ENCODE measurements at regions of chr5 and their contacts with region 1.

Region 1: DNA sequence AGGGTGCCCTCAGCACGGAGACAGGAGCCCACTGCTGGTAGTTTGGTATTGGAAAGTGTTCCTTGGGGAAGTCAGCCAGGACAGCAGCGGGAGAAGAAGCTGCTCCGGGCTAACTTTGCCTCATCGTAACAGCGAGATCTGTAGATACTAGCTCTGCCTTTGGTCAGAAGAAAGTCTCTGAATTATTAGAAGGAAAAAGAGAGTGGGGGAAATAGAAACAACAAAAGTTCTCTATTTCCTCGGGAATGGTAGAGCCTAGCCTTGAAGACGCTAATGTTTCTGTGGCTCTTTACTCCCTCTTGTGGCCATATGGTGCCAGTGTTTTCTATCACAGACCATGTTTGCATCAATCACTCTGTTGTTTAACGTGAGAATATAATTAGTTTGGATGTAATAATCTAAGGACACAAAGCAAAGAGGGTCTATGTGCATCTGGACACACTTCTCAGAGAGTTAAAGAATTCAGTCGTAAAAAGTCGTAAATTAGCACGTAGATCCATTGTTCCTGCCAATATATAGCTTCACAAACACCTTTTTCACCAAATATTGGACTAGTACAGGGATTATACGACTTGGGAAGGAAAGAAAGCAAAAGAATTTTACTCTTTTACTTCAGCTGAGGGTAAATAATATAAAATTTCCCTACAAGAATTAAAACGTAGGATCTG is 40.2 kb upstream of the HSD17B4 start:
- DNase-seq: no peak

Region 2: GRCh38 chr5:118987988-118988865 is 423.8 kb before region 1 on chr5 and contains the start of gene DTWD2:
- intact Hi-C with region 1: loop called (anchors 1 kb)
- DNase-seq: peak; percentile 97
- total RNA-seq, gene DTWD2: 10.1 TPM

Region 3: DNA sequence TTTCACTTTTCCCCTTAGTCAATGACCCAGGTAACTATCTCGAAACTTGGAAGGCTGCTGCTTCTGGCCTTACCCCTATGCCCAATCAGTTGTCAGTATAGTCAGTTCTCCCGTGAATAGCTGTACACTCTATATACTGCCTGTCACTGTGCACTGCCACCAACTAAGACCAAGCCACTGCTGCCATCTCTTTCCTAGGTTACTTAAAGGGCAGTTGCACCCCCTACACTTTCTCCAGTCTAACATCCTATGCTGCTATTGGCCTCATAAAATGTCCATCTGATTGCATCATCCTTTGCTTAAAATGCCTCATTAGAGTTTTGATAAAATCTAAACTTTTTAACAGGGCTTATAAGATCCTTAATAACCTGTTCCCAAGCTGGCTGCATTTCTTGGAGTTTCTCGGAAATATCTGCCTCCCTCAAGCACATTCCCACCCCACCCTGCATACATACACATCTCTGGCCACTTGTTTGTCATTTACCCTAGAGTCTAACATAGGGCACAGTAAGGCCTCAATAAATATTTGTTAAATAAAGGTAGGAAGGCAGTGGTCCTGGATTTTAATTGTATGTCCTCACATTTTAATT is 89.0 kb before region 1 on chr5:
- intact Hi-C with region 1: loop called (anchors 5 kb)
- DNase-seq: no peak

Region 4: DNA sequence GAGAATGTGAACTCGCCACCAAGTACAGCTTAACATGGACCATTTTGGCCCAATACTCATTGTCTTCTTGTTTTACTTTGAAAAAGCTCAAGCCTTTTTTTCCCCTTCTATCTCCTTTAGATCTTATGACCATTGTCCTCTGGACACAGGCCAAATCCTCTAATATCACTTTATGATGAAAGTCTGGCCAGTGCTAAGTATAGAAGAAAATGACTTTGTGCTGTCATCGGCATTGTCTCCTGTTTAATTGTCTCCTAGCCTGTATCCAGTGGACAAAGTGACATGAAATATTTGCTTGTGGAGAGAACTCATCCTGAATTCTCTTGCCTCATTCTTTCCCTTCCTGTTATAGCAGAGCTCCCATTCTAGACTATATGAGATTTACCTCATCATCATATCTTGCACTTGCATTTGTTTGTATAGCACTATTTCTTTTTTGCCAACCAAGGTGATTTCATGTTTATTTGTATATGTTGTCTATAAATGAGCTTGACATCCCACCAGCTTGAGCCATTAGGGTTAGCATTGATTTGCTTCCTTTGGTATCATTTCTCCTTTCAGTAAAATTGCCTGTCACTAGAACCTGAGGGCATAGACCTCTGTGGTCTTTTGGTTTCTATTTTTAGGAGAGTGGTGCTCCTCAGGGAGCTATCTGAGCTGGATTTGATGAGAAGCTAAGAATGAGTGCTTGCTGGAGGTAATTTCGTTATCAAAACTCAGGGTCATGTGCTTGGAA is 75.1 kb before region 1 on chr5:
- intact Hi-C with region 1: loop called (anchors 5 kb)
- DNase-seq: no peak

Region 5: DNA sequence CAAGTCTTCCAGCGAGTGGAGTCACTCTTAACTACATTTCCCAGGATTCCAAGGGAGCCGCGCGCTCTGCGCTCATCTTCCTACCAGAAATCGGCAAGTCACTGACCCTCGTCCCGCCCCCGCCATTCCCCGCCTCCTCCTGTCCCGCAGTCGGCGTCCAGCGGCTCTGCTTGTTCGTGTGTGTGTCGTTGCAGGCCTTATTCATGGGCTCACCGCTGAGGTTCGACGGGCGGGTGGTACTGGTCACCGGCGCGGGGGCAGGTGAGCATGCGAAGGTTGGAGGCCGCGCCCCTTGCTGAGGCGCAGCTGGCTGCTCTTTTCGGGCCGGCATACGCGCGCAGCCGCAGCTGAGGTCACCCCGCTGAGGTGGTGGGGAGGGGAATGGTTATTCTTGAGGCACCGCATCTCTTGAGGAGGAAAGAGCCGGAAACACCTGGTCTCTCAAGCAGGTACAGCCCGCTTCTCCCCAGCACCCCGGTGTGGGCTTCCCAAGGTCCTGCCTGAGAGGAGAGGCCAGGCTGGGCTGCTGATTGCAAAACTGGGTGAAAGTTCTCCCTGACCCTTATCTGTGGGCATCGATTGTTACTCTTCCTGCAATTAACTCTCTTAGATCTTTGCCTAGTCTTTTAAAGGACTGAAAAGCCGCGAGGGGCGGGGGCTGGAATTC is 40.4 kb after region 1 on chr5 and contains the start of gene HSD17B4:
- intact Hi-C with region 1: no loop called
- DNase-seq: peak; percentile 96
- total RNA-seq, gene HSD17B4: 189 TPM